GM12878 (cell line): ENCODE measurements at regions of chr7 and their contacts with region 1.

Region 1: DNA sequence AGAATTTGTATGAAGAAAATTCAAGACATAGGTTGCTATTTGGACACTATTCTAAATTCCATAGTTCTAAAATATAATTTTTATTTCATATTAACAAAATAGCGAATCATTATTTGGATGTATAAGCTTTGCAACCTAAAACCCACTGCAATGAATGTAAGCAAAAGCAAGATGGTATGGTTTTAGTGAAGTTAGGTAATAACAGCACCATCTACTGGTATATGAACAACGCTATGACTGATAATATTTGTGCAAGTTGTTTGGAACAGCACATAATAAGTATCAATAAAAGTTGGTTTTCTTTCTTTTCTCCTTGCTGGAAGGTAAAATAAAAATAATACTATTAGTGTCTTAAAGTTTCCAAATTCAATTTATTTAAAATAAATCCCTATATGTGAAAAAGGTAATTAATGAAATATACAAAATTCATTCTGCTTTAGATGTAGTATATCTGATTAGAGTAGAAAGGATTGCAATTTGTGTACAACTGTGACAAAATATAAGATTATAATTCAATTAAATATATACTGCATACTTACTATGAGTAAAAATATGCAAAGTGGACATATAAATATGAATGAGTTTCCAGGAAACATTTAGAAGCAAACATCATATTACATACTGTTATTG is 79.0 kb upstream of the LSM8 start:
- DNase-seq: no peak
- ATAC-seq: peak; percentile 80
- H3K4me3 ChIP-seq: no peak overlapping the region
- H3K27ac ChIP-seq: no peak overlapping the region
- H3K4me1 ChIP-seq: no peaks in the 10 kb centered on the region
- H3K27me3 ChIP-seq: no peaks in the 10 kb centered on the region
- CTCF ChIP-seq: peak; percentile 42 to 62 (median 52); a peak in 5 of 6 replicates
- EP300 ChIP-seq: no peak
- POLR2A ChIP-seq: no peak
- RAD21 ChIP-seq: peak; percentile 63

Region 2: DNA sequence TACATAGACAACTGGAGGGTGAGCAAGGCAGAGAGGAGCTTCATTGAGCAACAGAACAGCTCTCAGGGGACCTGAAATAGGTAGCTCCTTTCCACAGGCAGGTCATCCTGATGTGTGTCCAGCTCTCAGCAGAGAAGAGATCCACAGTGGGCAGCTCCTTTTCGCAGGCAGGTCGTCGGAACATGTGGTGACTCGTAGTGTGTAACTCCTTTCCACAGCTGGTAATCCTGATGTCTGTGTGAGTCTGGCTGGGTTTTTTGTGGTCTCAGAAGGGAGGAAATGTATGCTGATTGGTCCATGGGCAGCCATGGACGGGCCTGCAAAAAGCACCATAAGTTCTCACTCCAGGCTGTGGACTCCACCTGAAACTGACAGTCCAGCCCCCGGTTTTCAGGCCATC is 1919.0 kb before region 1 on chr7:
- CTCF ChIA-PET with region 1: no interaction called
- POLR2A ChIA-PET with region 1: no interaction called
- RAD21 ChIA-PET with region 1: no interaction called
- SMC1A ChIA-PET with region 1: no interaction called
- in situ Hi-C with region 1: no loop called
- intact Hi-C with region 1: no loop called
- DNase-seq: no peak
- ATAC-seq: no peak
- H3K4me3 ChIP-seq: no peak overlapping the region
- H3K27ac ChIP-seq: no peak overlapping the region
- H3K4me1 ChIP-seq: no peaks in the 10 kb centered on the region
- H3K27me3 ChIP-seq: peaks cover 0 to 4% of the 10 kb centered on the region in 2 experiments; a peak in 1 of 4 replicates
- CTCF ChIP-seq: no peak
- EP300 ChIP-seq: no peak
- POLR2A ChIP-seq: no peak
- RAD21 ChIP-seq: no peak

Region 3: DNA sequence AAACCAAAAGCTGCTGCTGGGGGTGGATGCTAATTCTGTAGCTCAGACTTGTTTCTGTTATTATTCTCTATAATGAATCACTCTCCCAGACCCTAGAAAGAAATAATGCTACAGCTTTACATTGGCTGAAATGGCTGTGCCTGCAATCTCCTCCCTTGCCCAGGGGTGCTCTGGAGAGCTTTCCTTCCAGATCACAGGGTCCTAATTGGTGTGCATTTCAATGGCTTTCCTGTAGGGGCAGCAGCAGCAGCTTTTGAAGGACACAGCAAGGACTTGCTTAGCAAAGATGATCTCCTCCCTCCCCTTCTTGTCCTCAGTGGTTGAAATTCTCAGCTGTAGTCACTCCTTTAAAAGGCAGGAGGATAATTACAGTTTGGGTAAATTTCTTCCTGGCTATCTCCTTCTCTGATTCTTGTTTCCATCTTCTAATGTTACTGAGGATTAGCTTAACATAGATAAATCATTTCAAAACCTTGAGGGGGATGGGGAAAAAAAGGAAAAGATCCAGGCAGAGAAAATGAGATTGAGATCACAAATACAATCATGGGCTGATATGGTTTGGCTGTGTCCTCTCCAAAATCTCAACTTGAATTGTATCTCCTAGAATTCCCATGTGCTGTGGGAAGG is 111.4 kb before region 1 on chr7:
- CTCF ChIA-PET with region 1: interaction called, 6 read pairs
- POLR2A ChIA-PET with region 1: no interaction called
- RAD21 ChIA-PET with region 1: interaction called, 4 read pairs
- SMC1A ChIA-PET with region 1: interaction called, 8 read pairs
- in situ Hi-C with region 1: no loop called
- intact Hi-C with region 1: loop called (anchors 5 kb)
- DNase-seq: no peak
- ATAC-seq: peak; percentile 98
- H3K4me3 ChIP-seq: no peak overlapping the region
- H3K27ac ChIP-seq: no peak overlapping the region
- H3K4me1 ChIP-seq: no peaks in the 10 kb centered on the region
- H3K27me3 ChIP-seq: no peaks in the 10 kb centered on the region
- CTCF ChIP-seq: peak; percentile 48 to 65 (median 62)
- EP300 ChIP-seq: no peak
- POLR2A ChIP-seq: no peak
- RAD21 ChIP-seq: peak; percentile 32; the same call in 1 of the 2 replicates